GM12878 (cell line): ENCODE measurements at regions of chr5 and their contacts with region 1.

Region 1: DNA sequence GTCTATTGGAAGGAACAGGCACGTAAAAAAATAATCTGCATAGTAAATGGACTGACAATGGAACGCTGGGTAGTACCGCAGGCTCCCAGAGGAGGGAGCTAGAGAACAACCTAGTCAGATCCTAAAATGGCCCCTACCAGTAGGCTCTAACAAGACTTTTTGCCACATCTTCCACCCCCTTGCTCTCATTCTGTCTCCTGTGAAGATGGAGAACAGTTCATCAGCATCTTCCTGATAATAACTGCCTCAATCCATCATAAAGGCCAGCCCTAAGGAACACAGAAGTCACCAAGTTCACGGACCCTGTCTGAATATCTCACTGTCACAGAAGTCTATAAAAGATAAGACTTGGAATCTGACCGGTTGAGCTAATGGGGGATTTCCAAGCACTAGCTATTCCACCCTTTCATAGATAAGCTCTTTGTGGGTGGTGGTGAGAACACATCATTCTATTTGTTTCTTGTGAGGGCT is 133.4 kb downstream of the SLC1A3 start:
- DNase-seq: no peak
- ATAC-seq: peak; percentile 84
- H3K4me3 ChIP-seq: no peak overlapping the region
- H3K27ac ChIP-seq: no peak overlapping the region
- H3K4me1 ChIP-seq: no peaks in the 10 kb centered on the region
- H3K27me3 ChIP-seq: no peaks in the 10 kb centered on the region
- CTCF ChIP-seq: peak; percentile 85 to 96 (median 93)
- EP300 ChIP-seq: no peak
- POLR2A ChIP-seq: no peak
- RAD21 ChIP-seq: peak; percentile 84

Region 2: DNA sequence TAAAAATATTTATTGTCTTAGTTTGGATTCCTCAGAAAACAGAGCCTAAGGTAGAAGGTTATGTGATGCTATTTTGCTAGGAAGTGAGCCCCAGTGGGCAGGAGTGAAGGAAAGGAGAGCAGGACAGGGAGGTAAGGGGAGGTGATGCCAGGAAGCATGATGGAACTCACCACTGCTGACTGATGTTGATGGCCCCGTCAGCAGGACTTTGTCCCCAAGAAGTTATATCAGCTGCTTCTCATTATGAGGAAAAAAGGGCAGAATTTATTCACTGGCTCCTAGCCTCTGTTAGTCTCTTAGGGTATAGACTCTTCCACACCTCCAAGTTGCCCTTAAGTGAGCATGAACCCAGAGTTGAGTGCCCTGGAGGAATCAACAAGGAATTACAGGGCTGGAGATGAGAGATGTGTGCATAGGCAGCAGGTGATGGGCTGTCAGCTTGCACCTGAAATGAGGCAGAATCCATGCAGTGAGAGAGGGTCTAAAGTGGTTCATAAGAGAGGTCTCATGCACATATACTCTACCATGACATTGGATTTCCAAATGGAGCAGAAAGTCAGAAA is 16.2 kb after region 1 on chr5:
- CTCF ChIA-PET with region 1: interaction called, 20 read pairs
- POLR2A ChIA-PET with region 1: no interaction called
- RAD21 ChIA-PET with region 1: no interaction called
- SMC1A ChIA-PET with region 1: interaction called, 11 read pairs
- in situ Hi-C with region 1: no loop called
- intact Hi-C with region 1: no loop called
- DNase-seq: no peak
- ATAC-seq: 0 out of 3 replicates have a peak, but pooled peaks have one; percentile 19
- H3K4me3 ChIP-seq: no peak overlapping the region
- H3K27ac ChIP-seq: no peak overlapping the region
- H3K4me1 ChIP-seq: no peaks in the 10 kb centered on the region
- H3K27me3 ChIP-seq: no peaks in the 10 kb centered on the region
- CTCF ChIP-seq: no peak
- EP300 ChIP-seq: no peak
- POLR2A ChIP-seq: no peak
- RAD21 ChIP-seq: no peak

Region 3: GRCh38 chr5:36875790-36876388 is 136.1 kb after region 1 on chr5:
- CTCF ChIA-PET with region 1: interaction called, 47 read pairs
- POLR2A ChIA-PET with region 1: no interaction called
- RAD21 ChIA-PET with region 1: interaction called, 14 read pairs
- SMC1A ChIA-PET with region 1: interaction called, 20 read pairs
- in situ Hi-C with region 1: loop called (anchors 5 kb)
- intact Hi-C with region 1: no loop called
- DNase-seq: peak; percentile 46
- ATAC-seq: peak; percentile 71
- H3K4me3 ChIP-seq: peak overlapping the region; percentile 95
- H3K27ac ChIP-seq: peak overlapping the region; percentile 85
- H3K4me1 ChIP-seq: peaks cover 7% of the 10 kb centered on the region; the same call in 1 of the 2 replicates
- H3K27me3 ChIP-seq: no peaks in the 10 kb centered on the region
- CTCF ChIP-seq: peak; percentile 49 to 65 (median 61)
- EP300 ChIP-seq: no peak
- POLR2A ChIP-seq: no peak
- RAD21 ChIP-seq: peak; percentile 52

Region 4: DNA sequence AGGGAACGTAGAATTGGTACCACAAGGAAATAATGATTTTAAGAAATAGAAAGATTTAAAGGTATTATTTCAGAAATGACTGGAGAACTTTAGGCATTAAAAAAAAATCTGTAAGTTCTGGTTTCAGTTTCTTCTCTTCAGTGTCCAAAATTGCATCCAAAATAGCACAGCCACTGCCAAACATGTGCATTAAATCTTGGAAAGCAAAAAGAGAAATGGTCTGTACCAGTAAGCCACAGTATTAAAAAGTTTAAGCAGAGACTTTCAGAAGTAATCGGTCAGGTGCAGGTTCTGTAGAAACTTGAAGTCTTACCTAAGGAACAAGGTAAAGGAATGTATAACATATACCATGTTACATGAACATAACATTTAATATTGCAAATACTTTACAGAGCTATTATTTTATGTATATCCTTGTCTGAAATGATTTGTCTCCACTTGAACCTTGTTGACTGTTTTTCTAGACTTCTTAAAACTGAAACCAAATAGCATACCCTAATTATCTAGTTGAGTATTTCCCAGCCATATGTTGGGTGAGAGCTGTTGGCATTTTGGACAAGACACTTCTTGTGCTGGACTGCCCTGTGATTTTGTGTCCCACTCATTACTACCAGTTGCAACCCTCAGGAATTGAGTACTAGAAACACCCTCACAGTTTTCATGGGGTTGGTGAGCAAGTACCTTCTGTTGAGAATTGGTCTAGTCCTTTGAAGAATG is 168.9 kb after region 1 on chr5:
- CTCF ChIA-PET with region 1: no interaction called
- POLR2A ChIA-PET with region 1: no interaction called
- RAD21 ChIA-PET with region 1: no interaction called
- SMC1A ChIA-PET with region 1: no interaction called
- in situ Hi-C with region 1: no loop called
- intact Hi-C with region 1: no loop called
- DNase-seq: no peak
- ATAC-seq: peak; percentile 69
- H3K4me3 ChIP-seq: no peak overlapping the region; the same call in 1 of the 2 replicates
- H3K27ac ChIP-seq: peak overlapping the region; percentile 57; the same call in 1 of the 2 replicates
- H3K4me1 ChIP-seq: peaks cover 12% of the 10 kb centered on the region; the same call in 1 of the 2 replicates
- H3K27me3 ChIP-seq: no peaks in the 10 kb centered on the region
- CTCF ChIP-seq: no peak
- EP300 ChIP-seq: no peak
- POLR2A ChIP-seq: no peak
- RAD21 ChIP-seq: no peak

Region 5: DNA sequence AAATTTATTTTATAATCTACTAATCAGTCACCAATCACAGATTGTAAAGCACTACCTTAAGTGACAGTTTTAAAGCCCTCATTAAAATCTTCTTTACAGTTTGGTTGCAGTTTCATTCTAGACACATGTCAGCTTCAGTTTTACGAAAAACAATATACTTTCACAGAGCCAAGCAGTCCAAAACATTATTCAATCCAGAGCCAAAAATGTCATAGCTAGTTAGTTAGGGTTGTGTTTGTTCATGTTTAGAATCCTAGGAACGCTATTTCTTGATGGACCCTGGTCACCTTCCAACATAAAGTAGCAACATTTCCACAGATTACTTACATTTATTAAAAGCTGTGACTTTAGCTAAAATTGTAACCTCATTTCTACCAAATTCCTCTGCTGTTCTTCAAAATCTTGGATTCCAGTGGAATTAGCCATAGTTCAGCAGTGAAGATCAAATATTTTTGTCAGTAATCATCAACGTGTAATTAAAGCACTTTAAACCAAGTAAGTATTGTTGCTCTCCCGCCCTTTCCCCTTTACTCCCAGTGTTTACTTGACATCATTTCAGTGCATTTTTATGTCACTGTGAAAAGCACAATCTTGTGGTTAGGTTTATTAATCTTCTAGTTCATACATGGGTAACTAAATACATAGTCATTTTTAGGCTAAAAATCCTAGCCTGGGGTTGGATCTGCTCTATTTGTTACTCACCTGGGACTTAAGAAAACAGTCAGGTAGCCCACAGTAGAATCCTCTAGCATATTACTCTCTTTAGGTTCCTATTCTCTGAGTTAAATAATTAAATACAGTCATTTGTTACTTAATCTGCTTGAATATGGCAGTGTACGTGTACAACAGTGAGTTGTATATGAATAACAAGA is 211.0 kb after region 1 on chr5:
- CTCF ChIA-PET with region 1: interaction called, 11 read pairs
- POLR2A ChIA-PET with region 1: no interaction called
- RAD21 ChIA-PET with region 1: interaction called, 4 read pairs
- SMC1A ChIA-PET with region 1: interaction called, 14 read pairs
- in situ Hi-C with region 1: no loop called
- intact Hi-C with region 1: no loop called
- DNase-seq: no peak
- ATAC-seq: peak; percentile 76
- H3K4me3 ChIP-seq: no peak overlapping the region
- H3K27ac ChIP-seq: no peak overlapping the region
- H3K4me1 ChIP-seq: no peaks in the 10 kb centered on the region
- H3K27me3 ChIP-seq: no peaks in the 10 kb centered on the region
- CTCF ChIP-seq: no peak
- EP300 ChIP-seq: no peak
- POLR2A ChIP-seq: no peak
- RAD21 ChIP-seq: no peak